ENCODE measurements at regions of chr10 and their contacts with region 1.

Region 1: DNA sequence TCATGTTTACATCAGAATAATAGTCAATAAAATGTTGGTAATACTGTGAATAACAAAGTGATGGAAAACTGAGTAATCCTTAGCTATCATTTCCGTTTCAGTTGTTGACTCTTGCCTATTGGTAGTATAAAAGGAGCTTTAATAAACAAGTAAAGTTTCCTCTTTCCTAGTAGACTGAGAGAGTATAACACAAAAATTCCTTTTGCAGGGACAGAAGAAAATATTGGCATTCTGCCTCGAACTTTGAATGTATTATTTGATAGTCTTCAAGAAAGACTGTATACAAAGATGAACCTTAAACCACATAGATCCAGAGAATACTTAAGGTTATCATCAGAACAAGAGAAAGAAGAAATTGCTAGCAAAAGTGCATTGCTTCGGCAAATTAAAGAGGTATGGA is 9.4 kb downstream of the KIF20B start:
- DNase-seq: no peak
- H3K4me3 ChIP-seq: no peak overlapping the region
- H3K27ac ChIP-seq: no peak overlapping the region
- H3K4me1 ChIP-seq: no peaks in the 10 kb centered on the region
- H3K27me3 ChIP-seq: no peaks in the 10 kb centered on the region
- CTCF ChIP-seq: no peak
- POLR2A ChIP-seq: no peak

Region 2: GRCh38 chr10:89575031-89575430 is 135.7 kb before region 1 on chr10:
- intact Hi-C with region 1: loop called (anchors 5 kb)
- DNase-seq: no peak
- H3K4me3 ChIP-seq: no peak overlapping the region
- H3K27ac ChIP-seq: no peak overlapping the region
- H3K4me1 ChIP-seq: no peaks in the 10 kb centered on the region
- H3K27me3 ChIP-seq: no peaks in the 10 kb centered on the region
- CTCF ChIP-seq: no peak
- POLR2A ChIP-seq: no peak

Region 3: DNA sequence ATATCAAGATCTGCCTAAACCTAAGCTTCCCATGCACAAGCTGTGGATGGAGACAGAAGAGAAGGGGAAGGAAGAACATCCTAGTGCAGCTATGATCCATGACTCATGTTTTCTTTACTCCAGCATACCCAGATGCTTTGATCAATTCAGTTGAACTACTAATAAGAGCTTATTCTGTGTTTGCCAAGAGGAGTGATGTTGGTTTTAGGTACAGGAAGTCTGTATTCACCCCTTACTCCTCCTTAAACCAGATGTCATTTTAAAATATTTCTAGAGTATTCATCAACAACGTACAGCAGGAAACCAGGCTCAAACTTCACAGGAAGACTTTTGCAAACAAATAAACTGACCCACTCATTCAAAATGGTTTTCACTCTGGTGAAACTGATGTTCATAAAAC is 94.9 kb before region 1 on chr10:
- intact Hi-C with region 1: no loop called
- DNase-seq: no peak
- H3K4me3 ChIP-seq: no peak overlapping the region
- H3K27ac ChIP-seq: no peak overlapping the region
- H3K4me1 ChIP-seq: no peaks in the 10 kb centered on the region
- H3K27me3 ChIP-seq: no peaks in the 10 kb centered on the region
- CTCF ChIP-seq: no peak
- POLR2A ChIP-seq: no peak

Measured in prostate gland (tissue), 2 donors.